H1 (cell line): ENCODE measurements at regions of chr13 and their contacts with region 1.

Region 1: GRCh38 chr13:38686577-38687245 is at the start of gene FREM2:
- DNase-seq: peak; percentile 89 to 91
- H3K4me3 ChIP-seq: peak within 1 kb of the TSS; percentile 46 to 83 (median 80)
- H3K27ac ChIP-seq: peak within 1 kb of the TSS; percentile 8; the same call in 1 of the 2 replicates
- H3K4me1 ChIP-seq: peaks cover 0 to 13% (median 5%) of the 10 kb centered on the region in 4 experiments; a peak in 6 of 7 replicates
- H3K27me3 ChIP-seq: peaks cover 0 to 13% (median 10%) of the 10 kb centered on the region in 4 experiments; a peak in 6 of 7 replicates
- CTCF ChIP-seq: no peak
- EP300 ChIP-seq: no peak
- POLR2A ChIP-seq: peak in 1 of 2 experiments; percentile 86; a peak in 2 of 3 replicates
- RAD21 ChIP-seq: peak in 1 of 2 experiments; percentile 19; a peak in 1 of 4 replicates
- total RNA-seq, gene FREM2: 22.2 and 22.8 TPM in 2 replicates

Region 2: DNA sequence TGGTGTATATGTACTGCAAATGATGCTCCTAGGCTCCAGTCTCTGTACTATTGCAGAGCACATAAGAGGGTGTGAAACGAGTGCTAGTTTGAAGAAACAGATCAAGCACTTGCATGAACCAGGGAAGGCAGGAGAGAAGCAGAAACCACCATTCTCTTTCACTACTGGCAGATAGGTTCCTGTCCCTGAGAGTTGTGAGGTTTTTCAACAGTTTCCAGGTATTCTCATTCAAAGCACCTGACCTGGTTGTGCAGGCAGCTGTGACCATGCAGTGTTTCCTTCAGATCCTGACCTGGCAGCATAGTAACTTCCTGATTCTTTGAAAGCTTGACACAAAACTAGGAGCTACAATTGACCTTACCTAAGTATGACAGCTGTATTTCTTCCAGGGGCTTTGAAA is 172.1 kb before region 1 on chr13:
- CTCF ChIA-PET with region 1: no interaction called
- POLR2A ChIA-PET with region 1: no interaction called
- DNase-seq: no peak
- H3K4me3 ChIP-seq: no peak overlapping the region
- H3K27ac ChIP-seq: no peak overlapping the region
- H3K4me1 ChIP-seq: peaks cover 9 to 15% (median 11%) of the 10 kb centered on the region in 4 experiments
- H3K27me3 ChIP-seq: no peaks in the 10 kb centered on the region
- CTCF ChIP-seq: no peak
- EP300 ChIP-seq: no peak
- POLR2A ChIP-seq: no peak
- RAD21 ChIP-seq: no peak

Region 3: DNA sequence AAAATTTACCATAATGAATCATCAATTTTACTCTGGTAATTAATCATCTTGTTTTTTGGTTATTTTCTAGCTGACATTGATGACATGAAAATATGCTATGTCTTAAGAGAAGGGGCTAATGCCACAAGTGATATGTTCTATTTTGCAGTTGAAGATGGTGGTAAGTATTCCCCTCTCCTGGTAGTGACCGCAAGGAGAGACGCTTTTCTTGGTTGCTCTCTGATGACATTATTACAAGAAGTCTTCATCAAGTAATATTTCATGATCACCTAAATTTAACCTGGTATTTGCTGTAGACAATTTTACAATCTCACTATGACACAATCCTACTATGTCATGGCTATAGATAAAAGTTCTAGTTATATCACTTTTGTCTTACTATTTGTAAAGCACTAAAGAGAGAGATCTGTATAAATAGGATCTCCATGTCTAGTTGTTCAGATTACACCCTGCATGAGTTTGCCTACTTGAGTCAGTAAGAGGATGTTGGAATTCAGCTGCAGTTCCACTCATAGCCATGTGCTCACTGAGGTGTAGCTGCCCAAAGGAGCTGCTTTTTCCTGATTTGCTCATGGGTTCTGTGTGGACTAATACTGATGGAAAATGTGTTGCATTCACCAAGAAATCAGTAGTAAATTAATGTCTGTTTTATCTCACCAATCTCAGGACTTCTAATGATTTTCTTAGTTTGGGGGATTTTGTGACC is 11.1 kb after region 1 on chr13:
- CTCF ChIA-PET with region 1: interaction called, 22 read pairs
- POLR2A ChIA-PET with region 1: interaction called, 19 read pairs
- DNase-seq: no peak
- H3K4me3 ChIP-seq: no peak overlapping the region
- H3K27ac ChIP-seq: no peak overlapping the region
- H3K4me1 ChIP-seq: peaks cover 0 to 4% (median under 1%) of the 10 kb centered on the region in 4 experiments; a peak in 3 of 7 replicates
- H3K27me3 ChIP-seq: no peaks in the 10 kb centered on the region
- CTCF ChIP-seq: peak in 1 of 3 experiments; percentile 27; a peak in 1 of 4 replicates
- EP300 ChIP-seq: no peak
- POLR2A ChIP-seq: no peak
- RAD21 ChIP-seq: 0 out of 4 replicates have a peak, but pooled peaks of 1 of the 2 experiments have one; percentile 18

Region 4: GRCh38 chr13:38763439-38764381 is 77.0 kb after region 1 on chr13:
- CTCF ChIA-PET with region 1: interaction called, 61 read pairs
- POLR2A ChIA-PET with region 1: interaction called, 4 read pairs
- DNase-seq: peak in 1 of 2 experiments; percentile 19
- H3K4me3 ChIP-seq: peak overlapping the region in 1 of 4 experiments; percentile 14; a peak in 1 of 8 replicates
- H3K27ac ChIP-seq: 0 out of 2 replicates have a peak overlapping the region, but pooled peaks have one; percentile 39
- H3K4me1 ChIP-seq: peaks cover 0 to 5% (median 0%) of the 10 kb centered on the region in 4 experiments; a peak in 2 of 7 replicates
- H3K27me3 ChIP-seq: no peaks in the 10 kb centered on the region
- CTCF ChIP-seq: peak in 2 of 3 experiments; percentile 64 to 70; a peak in 3 of 4 replicates
- EP300 ChIP-seq: no peak
- POLR2A ChIP-seq: no peak
- RAD21 ChIP-seq: peak; percentile 84 to 85

Region 5: GRCh38 chr13:38872693-38873092 is 186.0 kb after region 1 on chr13:
- CTCF ChIA-PET with region 1: interaction called, 19 read pairs
- POLR2A ChIA-PET with region 1: no interaction called
- DNase-seq: peak; percentile 51 to 77
- H3K4me3 ChIP-seq: no peak overlapping the region
- H3K27ac ChIP-seq: no peak overlapping the region
- H3K4me1 ChIP-seq: no peaks in the 10 kb centered on the region
- H3K27me3 ChIP-seq: no peaks in the 10 kb centered on the region
- CTCF ChIP-seq: peak; percentile 57 to 95 (median 83)
- EP300 ChIP-seq: no peak
- POLR2A ChIP-seq: no peak
- RAD21 ChIP-seq: peak; percentile 78 to 85